AG04450 (cell line): ENCODE measurements at regions of chr6 and their contacts with region 1.

Region 1: DNA sequence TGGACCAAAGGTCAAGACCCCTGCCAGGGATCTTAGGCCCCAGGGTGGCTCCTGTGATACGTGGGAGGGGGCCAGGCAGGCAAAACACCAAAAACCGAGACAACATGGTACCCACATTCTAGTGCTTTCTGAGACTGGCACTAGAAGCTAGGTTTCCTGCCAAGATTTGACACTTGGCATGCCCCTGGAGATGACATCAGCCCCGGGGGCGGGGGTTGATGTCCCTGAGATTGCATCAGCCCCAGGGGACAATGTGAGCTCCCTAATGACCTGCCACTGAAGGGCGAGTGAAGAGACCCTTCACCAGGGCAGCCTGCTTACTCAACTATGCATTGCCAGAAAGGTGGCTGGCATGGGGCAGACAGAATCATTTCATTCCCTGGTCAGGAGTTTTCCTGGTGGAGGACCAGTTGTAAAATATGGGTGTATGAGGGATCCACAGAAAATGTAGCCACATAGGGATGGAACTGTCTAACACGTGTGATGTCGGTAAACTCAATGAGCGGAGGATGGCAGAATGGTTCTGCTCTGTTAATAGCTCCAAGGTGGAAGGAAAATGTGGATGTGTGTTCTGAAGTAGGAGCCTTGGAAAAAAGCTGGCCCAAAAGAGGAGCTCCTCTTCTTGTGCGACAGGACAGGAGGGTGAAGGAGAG is 219.7 kb downstream of the UNC5CL start:
- DNase-seq: no peak
- H3K4me3 ChIP-seq: no peak overlapping the region
- H3K27ac ChIP-seq: no peak overlapping the region
- H3K27me3 ChIP-seq: no peaks in the 10 kb centered on the region
- CTCF ChIP-seq: no peak

Region 2: GRCh38 chr6:40788661-40789655 is 30.4 kb before region 1 on chr6:
- CTCF ChIA-PET with region 1: no interaction called
- POLR2A ChIA-PET with region 1: no interaction called
- DNase-seq: no peak
- H3K4me3 ChIP-seq: no peak overlapping the region
- H3K27ac ChIP-seq: no peak overlapping the region
- H3K27me3 ChIP-seq: no peaks in the 10 kb centered on the region
- CTCF ChIP-seq: no peak

Region 3: GRCh38 chr6:40804905-40805304 is 14.4 kb before region 1 on chr6:
- CTCF ChIA-PET with region 1: no interaction called
- POLR2A ChIA-PET with region 1: no interaction called
- DNase-seq: no peak
- H3K4me3 ChIP-seq: no peak overlapping the region
- H3K27ac ChIP-seq: no peak overlapping the region
- H3K27me3 ChIP-seq: peaks cover 2% of the 10 kb centered on the region
- CTCF ChIP-seq: peak; percentile 11; the same call in 1 of the 2 replicates

Region 4: GRCh38 chr6:40832691-40833090 is 13.4 kb after region 1 on chr6:
- CTCF ChIA-PET with region 1: interaction called, 14 read pairs
- POLR2A ChIA-PET with region 1: no interaction called
- DNase-seq: no peak
- H3K4me3 ChIP-seq: no peak overlapping the region
- H3K27ac ChIP-seq: no peak overlapping the region
- H3K27me3 ChIP-seq: peaks cover 9% of the 10 kb centered on the region
- CTCF ChIP-seq: no peak